Stomach (tissue), 19 donors: ENCODE measurements at regions of chr2 and their contacts with region 1.

Region 1: GRCh38 chr2:200585730-200586643 is at the start of gene AOX1:
- DNase-seq: peak; percentile 48 to 81
- H3K4me3 ChIP-seq: peak within 1 kb of the TSS; percentile 51 to 63 (median 56)
- H3K27ac ChIP-seq: peak within 1 kb of the TSS in 4 of 5 donors; percentile 67 to 81 (median 74)
- H3K4me1 ChIP-seq: peaks cover 11 to 14% (median 12%) of the 10 kb centered on the region in 4 donors
- H3K27me3 ChIP-seq: peaks cover 0 to 43% (median 7%) of the 10 kb centered on the region in 3 donors
- CTCF ChIP-seq: no peak
- EP300 ChIP-seq: no peak
- POLR2A ChIP-seq: no peak
- total RNA-seq, gene AOX1: 6.4 to 303 (median 12.9) TPM

Region 2: DNA sequence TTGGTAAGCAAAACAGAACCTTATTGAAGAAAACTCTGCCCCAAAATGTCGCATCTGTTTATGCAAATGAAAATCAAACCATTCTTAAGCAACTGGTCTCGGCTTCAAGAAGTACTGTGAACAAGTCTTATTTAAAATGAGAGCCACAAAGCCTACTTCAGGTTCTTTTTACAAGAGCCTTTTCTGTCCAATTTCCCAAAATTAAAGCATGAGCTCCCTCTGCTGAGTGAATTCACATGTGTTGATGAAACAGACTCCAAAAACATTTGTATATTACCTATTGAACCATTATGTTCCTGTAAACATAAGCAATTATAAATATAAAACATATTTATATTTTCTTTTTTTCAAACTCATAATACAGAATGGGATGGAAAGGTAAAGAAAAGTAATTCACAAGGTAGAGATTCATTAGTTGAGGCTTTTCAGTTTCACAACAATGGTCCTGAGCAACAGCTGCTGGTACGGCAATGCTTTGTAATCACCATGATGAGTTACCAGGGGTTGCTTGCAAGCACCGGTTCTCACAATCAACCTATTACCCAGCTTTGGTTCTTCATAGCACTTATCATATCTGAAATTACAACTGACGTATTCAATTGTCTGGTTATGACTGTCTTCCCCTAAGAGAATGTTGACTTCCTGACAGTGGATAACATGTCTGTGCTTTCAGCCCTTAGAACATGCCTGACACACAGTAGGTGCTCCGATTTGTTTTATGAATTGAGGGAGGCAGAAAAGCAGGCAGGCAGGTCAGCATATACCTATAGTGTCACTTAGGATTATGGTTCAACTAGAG is 117.3 kb after region 1 on chr2:
- intact Hi-C with region 1: loop called (anchors 10 kb)
- DNase-seq: peak in 1 of 2 donors; percentile 83
- H3K4me3 ChIP-seq: no peak overlapping the region
- H3K27ac ChIP-seq: no peak overlapping the region
- H3K4me1 ChIP-seq: no peaks in the 10 kb centered on the region
- H3K27me3 ChIP-seq: no peaks in the 10 kb centered on the region
- CTCF ChIP-seq: peak in 4 of 7 experiments; percentile 16 to 59 (median 34)
- EP300 ChIP-seq: no peak
- POLR2A ChIP-seq: no peak